Panc1 (cell line): ENCODE measurements at regions of chr21 and their contacts with region 1.

Region 1: DNA sequence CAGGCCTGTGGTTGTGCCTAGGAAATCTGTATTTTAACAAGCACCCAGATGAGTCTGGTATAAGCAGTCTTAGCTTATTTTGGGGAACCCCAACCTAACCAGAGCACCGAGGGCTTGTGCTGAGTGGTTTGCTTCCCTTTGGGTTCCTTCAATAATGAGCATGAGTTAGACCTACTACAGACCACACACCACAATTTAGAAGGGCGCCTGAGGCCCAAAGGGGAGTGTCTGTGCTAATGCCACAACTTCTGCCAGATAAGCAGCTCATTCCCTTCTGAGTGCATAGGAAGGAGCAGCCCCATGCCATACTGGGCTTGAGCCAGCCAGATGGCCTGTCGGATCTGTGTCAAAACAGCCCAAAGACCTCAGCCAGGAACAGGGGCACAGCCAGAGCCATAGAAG is 15.4 kb upstream of the LSS start:
- DNase-seq: no peak
- ATAC-seq: no peak
- H3K4me3 ChIP-seq: no peak overlapping the region
- H3K27ac ChIP-seq: no peak overlapping the region
- H3K4me1 ChIP-seq: no peaks in the 10 kb centered on the region
- H3K27me3 ChIP-seq: no peaks in the 10 kb centered on the region
- CTCF ChIP-seq: no peak

Region 2: DNA sequence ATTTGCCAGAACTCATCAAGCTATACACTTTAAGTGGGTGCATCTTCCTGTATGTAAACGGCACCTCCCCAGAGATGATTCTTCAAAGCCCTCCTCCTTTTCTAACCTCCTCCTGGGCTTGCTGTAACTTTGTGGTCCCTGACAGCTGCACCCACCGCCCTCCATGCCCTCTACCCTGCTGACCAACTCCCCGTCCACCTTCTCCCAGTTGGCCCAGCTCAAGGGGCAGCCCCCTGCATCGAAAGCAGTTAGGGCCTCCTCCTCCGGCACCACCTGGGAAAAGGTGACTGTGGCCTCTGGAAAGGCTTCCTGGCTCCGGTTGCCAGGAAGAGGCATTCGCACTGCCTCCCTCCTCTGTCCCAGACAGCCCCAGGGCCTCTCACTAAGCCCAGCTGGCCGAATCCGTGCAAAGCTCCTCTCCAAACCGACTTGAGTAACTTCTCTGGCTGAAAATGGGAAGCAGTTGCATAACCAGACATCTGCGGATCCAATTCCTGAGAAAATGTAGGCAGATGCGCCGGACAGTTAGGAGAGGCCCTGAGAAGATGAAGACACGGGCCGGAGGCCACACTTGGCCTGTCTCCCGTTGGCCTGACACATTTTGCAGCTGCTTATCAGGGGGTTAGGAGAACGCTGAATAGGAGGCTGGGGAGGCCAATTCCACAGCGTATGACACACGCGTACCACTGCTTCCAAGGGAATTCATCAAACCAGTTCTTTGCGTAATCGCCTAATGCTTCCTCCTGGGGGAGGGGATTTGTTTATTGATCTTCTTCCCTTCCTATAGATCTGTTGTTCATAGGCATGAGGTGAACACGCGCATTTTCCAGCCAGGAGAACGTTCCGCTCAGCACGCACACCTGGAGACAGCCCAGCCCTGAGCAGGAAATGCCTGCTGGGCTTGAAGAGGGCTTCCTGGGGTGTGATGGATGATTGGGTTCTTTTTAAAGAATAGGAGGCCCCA is 194.8 kb before region 1 on chr21:
- CTCF ChIA-PET with region 1: no interaction called
- POLR2A ChIA-PET with region 1: no interaction called
- in situ Hi-C with region 1: no loop called
- intact Hi-C with region 1: no loop called
- DNase-seq: no peak
- ATAC-seq: no peak
- H3K4me3 ChIP-seq: no peak overlapping the region
- H3K27ac ChIP-seq: no peak overlapping the region
- H3K4me1 ChIP-seq: no peaks in the 10 kb centered on the region
- H3K27me3 ChIP-seq: no peaks in the 10 kb centered on the region
- CTCF ChIP-seq: no peak

Region 3: DNA sequence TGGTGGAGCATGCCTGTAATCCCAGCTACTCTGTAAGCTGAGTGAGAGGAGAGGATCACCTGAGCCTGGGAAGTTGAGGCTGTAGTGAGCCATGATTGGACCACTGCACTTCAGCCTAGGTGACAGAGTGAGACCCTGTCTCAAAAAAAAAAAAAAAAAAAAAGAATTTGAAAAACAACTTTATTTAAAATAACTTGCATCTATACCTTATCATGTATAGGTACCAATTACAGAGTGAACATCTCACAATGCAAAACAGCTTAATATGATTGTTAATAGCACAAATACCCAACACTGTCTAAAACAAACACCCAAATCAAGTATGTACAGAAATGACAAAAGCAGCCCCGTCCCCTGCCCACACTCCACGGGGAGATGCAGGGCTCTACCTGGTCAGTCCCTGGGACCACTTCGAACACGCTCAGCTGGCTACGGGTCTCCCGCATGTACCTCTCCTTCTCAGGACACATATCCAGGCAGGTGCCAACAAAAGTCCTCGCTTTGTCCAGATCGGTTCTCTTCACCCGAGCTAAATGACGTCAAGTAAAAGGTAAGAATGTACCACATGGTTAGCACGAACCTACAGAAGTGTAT is 30.9 kb after region 1 on chr21:
- CTCF ChIA-PET with region 1: no interaction called
- POLR2A ChIA-PET with region 1: interaction called, 14 read pairs
- in situ Hi-C with region 1: no loop called
- intact Hi-C with region 1: no loop called
- DNase-seq: no peak
- ATAC-seq: no peak
- H3K4me3 ChIP-seq: no peak overlapping the region
- H3K27ac ChIP-seq: no peak overlapping the region
- H3K4me1 ChIP-seq: peaks cover 7% of the 10 kb centered on the region
- H3K27me3 ChIP-seq: no peaks in the 10 kb centered on the region
- CTCF ChIP-seq: no peak

Region 4: GRCh38 chr21:46368533-46369285 is 124.7 kb after region 1 on chr21:
- CTCF ChIA-PET with region 1: no interaction called
- POLR2A ChIA-PET with region 1: no interaction called
- in situ Hi-C with region 1: no loop called
- intact Hi-C with region 1: no loop called
- DNase-seq: no peak
- ATAC-seq: no peak
- H3K4me3 ChIP-seq: no peak overlapping the region
- H3K27ac ChIP-seq: no peak overlapping the region
- H3K4me1 ChIP-seq: no peaks in the 10 kb centered on the region
- H3K27me3 ChIP-seq: no peaks in the 10 kb centered on the region
- CTCF ChIP-seq: no peak